Left ventricle myocardium inferior (tissue), 1 donor: ENCODE measurements at regions of chr1 and their contacts with region 1.

Region 1: GRCh38 chr1:72296481-72296880 is 14.1 kb upstream of the NEGR1 start:
- DNase-seq: no peak
- H3K4me3 ChIP-seq: no peak overlapping the region
- H3K27ac ChIP-seq: no peak overlapping the region
- H3K4me1 ChIP-seq: no peaks in the 10 kb centered on the region
- H3K27me3 ChIP-seq: no peaks in the 10 kb centered on the region
- CTCF ChIP-seq: no peak

Region 2: GRCh38 chr1:72341661-72342060 is 45.2 kb after region 1 on chr1:
- intact Hi-C with region 1: loop called (anchors 2 kb)
- DNase-seq: no peak
- H3K4me3 ChIP-seq: no peak overlapping the region
- H3K27ac ChIP-seq: no peak overlapping the region
- H3K4me1 ChIP-seq: no peaks in the 10 kb centered on the region
- H3K27me3 ChIP-seq: no peaks in the 10 kb centered on the region
- CTCF ChIP-seq: no peak

Region 3: DNA sequence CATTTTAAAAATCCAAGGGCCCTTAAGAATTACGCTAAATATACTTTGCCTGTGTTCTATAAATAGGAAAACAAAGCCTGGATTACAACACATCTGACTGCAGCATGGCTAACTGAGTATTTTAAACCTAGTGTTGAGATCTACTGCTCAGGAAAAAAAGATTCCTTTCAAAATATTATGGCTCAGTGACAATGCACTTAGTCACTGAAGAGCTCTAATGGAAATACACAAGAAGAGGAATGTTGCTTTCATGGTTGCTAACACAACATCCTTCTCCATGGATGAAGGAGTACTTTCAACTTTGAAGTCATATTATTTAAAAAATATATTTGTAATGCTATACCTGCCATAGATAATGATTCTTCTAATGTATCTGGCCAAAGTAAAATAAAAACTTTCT is 234.2 kb after region 1 on chr1:
- intact Hi-C with region 1: no loop called
- DNase-seq: no peak
- H3K4me3 ChIP-seq: no peak overlapping the region
- H3K27ac ChIP-seq: no peak overlapping the region
- H3K4me1 ChIP-seq: no peaks in the 10 kb centered on the region
- H3K27me3 ChIP-seq: no peaks in the 10 kb centered on the region
- CTCF ChIP-seq: no peak